Activated CD4-positive, alpha-beta T cell treated with anti-CD3 and anti-CD28 coated beads for 36 hours (primary cell): ENCODE measurements at regions of chr1 and their contacts with region 1.

Region 1: GRCh38 chr1:18635891-18636595 is 5.4 kb downstream of the PAX7 start:
- DNase-seq: peak; percentile 50
- ATAC-seq: no peak
- H3K4me3 Mint-ChIP-seq: peak overlapping the region; percentile 4
- H3K27ac Mint-ChIP-seq: no peak overlapping the region
- H3K4me1 Mint-ChIP-seq: peaks cover 22% of the 10 kb centered on the region
- H3K27me3 Mint-ChIP-seq: peaks cover 86% of the 10 kb centered on the region

Region 2: DNA sequence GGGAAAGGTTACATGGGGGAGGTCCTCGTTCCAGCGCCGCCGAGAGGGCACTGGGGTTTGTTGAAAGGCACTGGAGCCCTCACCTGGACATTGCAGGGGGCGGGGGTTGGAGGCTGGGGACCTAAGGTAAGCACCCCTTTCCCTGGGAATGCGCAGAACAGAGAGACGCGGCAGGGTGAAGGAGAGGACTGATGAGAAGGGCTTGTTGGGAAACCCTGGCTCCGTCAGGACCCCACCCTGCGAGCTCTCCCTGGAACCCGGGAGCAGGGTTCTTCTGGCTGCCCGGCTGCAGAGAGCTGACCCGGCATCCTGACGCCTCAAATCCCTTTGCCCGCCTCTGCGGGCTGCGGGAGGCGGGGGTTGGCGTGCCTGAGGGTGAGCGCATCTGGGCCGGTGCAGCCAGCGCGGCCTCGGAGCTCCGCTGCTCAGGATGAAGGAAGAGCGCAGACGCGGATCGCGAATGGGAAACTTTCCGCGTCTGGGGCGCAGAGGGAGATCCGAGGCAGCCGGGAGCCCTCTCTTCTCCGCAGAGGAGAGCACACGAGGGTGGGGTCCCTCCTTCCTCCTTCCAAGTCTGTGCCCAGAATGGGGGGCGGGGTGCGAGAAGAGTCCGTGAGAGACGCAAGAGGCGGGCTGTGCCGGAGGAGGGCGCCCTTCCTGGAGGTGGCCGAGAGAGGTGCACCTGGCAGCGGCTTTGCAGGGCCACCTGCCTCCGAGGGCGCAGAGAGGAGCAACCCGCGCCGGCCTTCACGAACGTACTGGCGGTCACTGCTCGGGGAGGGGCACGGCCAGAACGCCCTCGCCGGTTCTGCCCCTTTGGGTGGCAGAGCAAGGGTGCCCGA is 526.1 kb before region 1 on chr1:
- CTCF ChIA-PET with region 1: no interaction called
- POLR2A ChIA-PET with region 1: no interaction called
- intact Hi-C with region 1: loop called (anchors 5 to 10 kb)
- DNase-seq: peak; percentile 69
- ATAC-seq: peak; percentile 69
- H3K4me3 Mint-ChIP-seq: no peak overlapping the region
- H3K27ac Mint-ChIP-seq: no peak overlapping the region
- H3K4me1 Mint-ChIP-seq: peaks cover 9% of the 10 kb centered on the region
- H3K27me3 Mint-ChIP-seq: peaks cover 53% of the 10 kb centered on the region

Region 3: DNA sequence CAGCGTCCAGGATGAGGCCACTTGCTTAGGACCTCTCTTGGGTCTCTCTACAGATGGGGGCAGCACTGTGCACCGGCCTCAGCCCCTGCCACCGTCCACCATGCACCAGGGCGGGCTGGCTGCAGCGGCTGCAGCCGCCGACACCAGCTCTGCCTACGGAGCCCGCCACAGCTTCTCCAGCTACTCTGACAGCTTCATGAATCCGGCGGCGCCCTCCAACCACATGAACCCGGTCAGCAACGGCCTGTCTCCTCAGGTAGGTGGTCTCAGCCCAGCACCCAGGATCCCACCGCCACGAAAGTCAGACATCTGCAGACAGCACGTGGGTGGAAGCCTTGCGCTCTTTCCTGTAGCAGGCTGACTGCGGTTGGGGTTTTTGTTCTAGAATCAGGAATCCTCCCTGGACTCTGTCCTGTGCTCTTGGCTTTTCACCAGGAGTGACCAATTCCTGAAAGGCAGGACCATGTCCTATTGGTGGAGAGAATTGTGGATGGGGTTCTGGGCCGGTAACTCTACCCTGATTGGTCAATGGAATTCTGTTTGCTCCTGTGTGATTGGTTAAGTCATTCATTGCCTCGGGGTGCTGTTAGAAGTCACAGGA is 67.1 kb after region 1 on chr1:
- CTCF ChIA-PET with region 1: no interaction called
- POLR2A ChIA-PET with region 1: no interaction called
- intact Hi-C with region 1: no loop called
- DNase-seq: no peak
- ATAC-seq: no peak
- H3K4me3 Mint-ChIP-seq: no peak overlapping the region
- H3K27ac Mint-ChIP-seq: no peak overlapping the region
- H3K4me1 Mint-ChIP-seq: no peaks in the 10 kb centered on the region
- H3K27me3 Mint-ChIP-seq: peaks cover 21% of the 10 kb centered on the region

Region 4: GRCh38 chr1:20485527-20486456 is 1849.7 kb after region 1 on chr1 and contains the start of gene CAMK2N1:
- CTCF ChIA-PET with region 1: no interaction called
- POLR2A ChIA-PET with region 1: no interaction called
- intact Hi-C with region 1: loop called in 1 of 2 experiments (anchors 10 kb)
- DNase-seq: peak; percentile 75
- ATAC-seq: peak; percentile 68
- H3K4me3 Mint-ChIP-seq: peak within 1 kb of the TSS; percentile 73
- H3K27ac Mint-ChIP-seq: no peak within 1 kb of the TSS
- H3K4me1 Mint-ChIP-seq: peaks cover 14% of the 10 kb centered on the region
- H3K27me3 Mint-ChIP-seq: peaks cover 58% of the 10 kb centered on the region
- total RNA-seq, gene CAMK2N1: 0.48 to 0.49 TPM